Activated CD4-positive, alpha-beta memory T cell treated with anti-CD3 and anti-CD28 coated beads, Interleukin-2, amount 10 ng/mL, durations not matched to agents 7 days and 5 days (primary cell): ENCODE measurements at regions of chr15 and their contacts with region 1.

Region 1: GRCh38 chr15:82809404-82810060 is at the start of gene WHAMM:
- DNase-seq: peak; percentile 96
- H3K4me3 Mint-ChIP-seq: peak within 1 kb of the TSS; percentile 85
- H3K27ac Mint-ChIP-seq: peak within 1 kb of the TSS; percentile 86
- H3K4me1 Mint-ChIP-seq: peaks cover 31% of the 10 kb centered on the region
- H3K27me3 Mint-ChIP-seq: peaks cover 15% of the 10 kb centered on the region
- total RNA-seq, gene WHAMM: 11.1 to 13.7 TPM

Region 2: GRCh38 chr15:82540055-82540983 is 269.2 kb before region 1 on chr15 and contains the start of gene RPS17:
- CTCF ChIA-PET with region 1: no interaction called
- POLR2A ChIA-PET with region 1: interaction called, 32 read pairs
- DNase-seq: peak; percentile 98
- H3K4me3 Mint-ChIP-seq: peak within 1 kb of the TSS; percentile 97
- H3K27ac Mint-ChIP-seq: peak within 1 kb of the TSS; percentile 95
- H3K4me1 Mint-ChIP-seq: peaks cover 47% of the 10 kb centered on the region
- H3K27me3 Mint-ChIP-seq: no peaks in the 10 kb centered on the region
- total RNA-seq, gene RPS17: 1,261 to 1,293 TPM

Region 3: GRCh38 chr15:82587805-82588204 is 221.7 kb before region 1 on chr15:
- CTCF ChIA-PET with region 1: no interaction called
- POLR2A ChIA-PET with region 1: no interaction called
- DNase-seq: no peak
- H3K4me3 Mint-ChIP-seq: no peak overlapping the region
- H3K27ac Mint-ChIP-seq: no peak overlapping the region
- H3K4me1 Mint-ChIP-seq: no peaks in the 10 kb centered on the region
- H3K27me3 Mint-ChIP-seq: peaks cover 36% of the 10 kb centered on the region

Region 4: GRCh38 chr15:82749951-82750830 is 59.3 kb before region 1 on chr15:
- CTCF ChIA-PET with region 1: interaction called, 14 read pairs
- POLR2A ChIA-PET with region 1: interaction called, 49 read pairs
- DNase-seq: peak; percentile 86
- H3K4me3 Mint-ChIP-seq: peak overlapping the region; percentile 96
- H3K27ac Mint-ChIP-seq: peak overlapping the region; percentile 92
- H3K4me1 Mint-ChIP-seq: peaks cover 43% of the 10 kb centered on the region
- H3K27me3 Mint-ChIP-seq: no peaks in the 10 kb centered on the region

Region 5: DNA sequence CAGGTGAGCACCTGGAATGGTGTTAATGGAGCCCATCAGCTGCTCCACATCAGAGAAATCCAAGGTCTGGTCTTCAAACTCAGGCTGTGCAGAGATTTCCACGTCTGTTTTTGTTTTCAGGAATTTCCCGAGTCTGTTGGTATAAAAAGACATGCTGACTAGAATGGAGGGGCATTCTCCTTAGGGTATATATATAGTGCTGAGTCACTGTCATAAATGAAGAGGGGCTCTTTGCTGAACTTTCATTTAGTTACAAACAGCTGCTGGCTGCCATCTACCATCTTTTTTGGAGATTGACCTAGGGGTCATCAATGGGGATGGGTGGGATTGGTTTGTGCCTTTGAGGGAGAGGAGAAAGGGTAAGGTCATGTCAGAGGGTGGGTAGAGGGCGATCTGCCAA is 30.8 kb before region 1 on chr15:
- CTCF ChIA-PET with region 1: no interaction called
- POLR2A ChIA-PET with region 1: no interaction called
- DNase-seq: no peak
- H3K4me3 Mint-ChIP-seq: no peak overlapping the region
- H3K27ac Mint-ChIP-seq: no peak overlapping the region
- H3K4me1 Mint-ChIP-seq: no peaks in the 10 kb centered on the region
- H3K27me3 Mint-ChIP-seq: peaks cover 2% of the 10 kb centered on the region

Region 6: GRCh38 chr15:82832601-82833361 is 23.2 kb after region 1 on chr15:
- CTCF ChIA-PET with region 1: interaction called, 17 read pairs
- POLR2A ChIA-PET with region 1: interaction called, 35 read pairs
- DNase-seq: peak; percentile 46
- H3K4me3 Mint-ChIP-seq: no peak overlapping the region
- H3K27ac Mint-ChIP-seq: peak overlapping the region; percentile 71
- H3K4me1 Mint-ChIP-seq: peaks cover 44% of the 10 kb centered on the region
- H3K27me3 Mint-ChIP-seq: no peaks in the 10 kb centered on the region